Naive thymus-derived CD8-positive, alpha-beta T cell (primary cell): ENCODE measurements at regions of chr19 and their contacts with region 1.

Region 1: DNA sequence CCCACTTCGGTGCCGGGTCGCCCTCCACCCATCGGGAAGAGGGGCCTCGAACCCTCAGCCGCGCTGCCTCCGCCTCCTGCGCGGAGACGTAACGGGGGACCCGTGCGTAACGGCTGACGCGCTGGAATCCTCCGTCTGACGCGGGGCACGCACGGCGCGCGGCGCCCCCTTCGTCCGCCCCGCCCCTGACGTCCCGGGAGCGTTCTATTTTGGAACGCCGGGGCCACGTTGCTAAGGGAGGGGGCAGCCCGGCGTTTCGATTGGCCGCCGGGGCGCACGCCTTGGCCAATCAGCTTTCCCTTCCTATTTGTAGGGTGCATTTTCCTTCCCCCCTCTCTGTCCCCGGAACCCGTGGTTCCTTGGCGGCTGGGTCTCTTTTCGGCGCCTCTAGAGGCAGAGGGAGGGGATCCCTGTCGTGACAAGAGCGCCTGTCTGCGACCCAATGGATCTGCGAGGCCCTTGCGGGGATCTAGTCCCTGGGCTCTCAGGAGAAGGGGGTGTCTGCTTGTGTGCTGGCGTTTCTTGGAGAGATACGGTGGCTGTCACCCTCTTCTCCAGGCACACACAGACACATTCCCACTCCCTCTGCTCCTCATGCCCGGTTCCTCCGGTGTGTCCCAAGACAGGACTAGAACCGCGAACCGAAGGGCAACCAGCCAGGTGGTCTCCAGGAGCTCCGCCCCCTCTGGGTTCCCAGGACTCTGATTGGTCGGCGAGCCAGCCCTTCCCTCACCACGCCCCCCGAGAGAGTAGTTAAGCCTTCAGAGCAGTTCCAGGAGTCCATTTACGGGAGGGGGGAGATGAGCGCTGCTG is 1.5 kb downstream of the FOSB start:
- DNase-seq: peak; percentile 66 to 98 (median 94)
- ATAC-seq: peak; percentile 51 to 63
- H3K4me3 Mint-ChIP-seq: peak overlapping the region; percentile 91 to 98 (median 94)
- H3K27ac Mint-ChIP-seq: peak overlapping the region; percentile 86 to 100 (median 99)
- H3K4me1 Mint-ChIP-seq: peaks cover 25 to 66% (median 41%) of the 10 kb centered on the region in 4 donors
- H3K27me3 Mint-ChIP-seq: peaks cover 7 to 38% (median 16%) of the 10 kb centered on the region in 5 donors

Region 2: GRCh38 chr19:45439569-45440254 is 29.6 kb before region 1 on chr19:
- POLR2A ChIA-PET with region 1: interaction called, 90 read pairs
- DNase-seq: peak; percentile 73 to 97 (median 86)
- ATAC-seq: peak; percentile 59 to 66
- H3K4me3 Mint-ChIP-seq: peak overlapping the region; percentile 58 to 84 (median 76)
- H3K27ac Mint-ChIP-seq: peak overlapping the region in 6 of 10 donors; percentile 81 to 91 (median 89)
- H3K4me1 Mint-ChIP-seq: peaks cover 18 to 40% (median 35%) of the 10 kb centered on the region in 4 donors
- H3K27me3 Mint-ChIP-seq: no peaks in the 10 kb centered on the region

Region 3: DNA sequence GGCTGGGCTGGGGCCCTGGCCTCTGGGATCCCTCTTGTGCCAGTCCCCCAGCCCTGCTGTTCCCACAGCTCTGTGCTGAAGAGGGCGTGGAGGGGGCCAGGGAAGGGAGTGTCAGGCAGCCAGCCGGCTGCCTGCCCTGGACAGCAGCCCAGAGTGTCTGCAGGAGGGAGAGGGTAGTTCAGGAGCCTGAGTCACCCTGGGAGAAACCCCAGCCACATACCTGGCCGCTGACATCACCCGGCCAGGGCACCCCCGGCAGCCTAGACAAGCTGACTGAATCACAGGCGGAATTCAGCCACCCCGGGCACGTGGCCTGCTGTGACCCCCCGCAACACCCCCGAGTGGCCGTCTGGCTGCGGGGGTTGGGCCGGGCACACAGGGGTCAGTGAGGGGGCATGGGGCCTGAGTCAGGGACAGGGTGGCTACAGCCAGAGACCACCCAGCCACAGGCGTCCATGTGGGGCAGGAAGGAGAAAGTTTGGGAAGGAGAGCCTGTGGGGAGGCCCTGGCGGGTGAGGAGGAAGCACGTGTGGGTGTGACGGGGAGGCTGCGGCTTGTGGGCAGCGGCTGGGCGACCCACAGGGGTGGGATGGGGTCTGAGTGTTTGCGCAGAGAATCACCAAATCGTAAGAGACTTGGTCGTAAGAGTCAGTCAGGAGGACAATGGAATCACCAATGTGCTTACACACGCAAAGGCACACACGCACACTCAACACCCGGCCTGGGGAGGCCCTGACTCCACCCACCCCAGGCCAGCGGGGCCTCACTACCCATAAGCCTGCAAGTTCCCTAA is 13.4 kb before region 1 on chr19:
- POLR2A ChIA-PET with region 1: interaction called, 37 read pairs
- DNase-seq: peak; percentile 36 to 75 (median 60)
- ATAC-seq: peak; percentile 46 to 48
- H3K4me3 Mint-ChIP-seq: peak overlapping the region; percentile 31 to 78 (median 60)
- H3K27ac Mint-ChIP-seq: peak overlapping the region in 9 of 10 donors; percentile 66 to 93 (median 88)
- H3K4me1 Mint-ChIP-seq: peaks cover 26 to 47% (median 33%) of the 10 kb centered on the region in 4 donors
- H3K27me3 Mint-ChIP-seq: peaks cover 0 to 10% (median 0%) of the 10 kb centered on the region in 5 donors

Region 4: GRCh38 chr19:45485305-45486077 is 16.2 kb after region 1 on chr19:
- POLR2A ChIA-PET with region 1: interaction called, 11 read pairs
- DNase-seq: peak; percentile 92 to 99 (median 96)
- ATAC-seq: peak; percentile 97 to 99
- H3K4me3 Mint-ChIP-seq: peak overlapping the region; percentile 89 to 97 (median 92)
- H3K27ac Mint-ChIP-seq: peak overlapping the region in 9 of 10 donors; percentile 6 to 92 (median 83)
- H3K4me1 Mint-ChIP-seq: peaks cover 0 to 12% (median 8%) of the 10 kb centered on the region in 4 donors
- H3K27me3 Mint-ChIP-seq: peaks cover 0 to 5% (median 0%) of the 10 kb centered on the region in 5 donors

Region 5: GRCh38 chr19:45528651-45529419 is 59.5 kb after region 1 on chr19:
- POLR2A ChIA-PET with region 1: no interaction called
- DNase-seq: peak in 4 of 10 donors; percentile 24 to 35 (median 32)
- ATAC-seq: peak; percentile 66 to 78
- H3K4me3 Mint-ChIP-seq: peak overlapping the region; percentile 45 to 74 (median 62)
- H3K27ac Mint-ChIP-seq: peak overlapping the region in 5 of 10 donors; percentile 63 to 91 (median 78)
- H3K4me1 Mint-ChIP-seq: peaks cover 8 to 22% (median 17%) of the 10 kb centered on the region in 4 donors
- H3K27me3 Mint-ChIP-seq: peaks cover 0 to 2% (median 0%) of the 10 kb centered on the region in 5 donors

Region 6: DNA sequence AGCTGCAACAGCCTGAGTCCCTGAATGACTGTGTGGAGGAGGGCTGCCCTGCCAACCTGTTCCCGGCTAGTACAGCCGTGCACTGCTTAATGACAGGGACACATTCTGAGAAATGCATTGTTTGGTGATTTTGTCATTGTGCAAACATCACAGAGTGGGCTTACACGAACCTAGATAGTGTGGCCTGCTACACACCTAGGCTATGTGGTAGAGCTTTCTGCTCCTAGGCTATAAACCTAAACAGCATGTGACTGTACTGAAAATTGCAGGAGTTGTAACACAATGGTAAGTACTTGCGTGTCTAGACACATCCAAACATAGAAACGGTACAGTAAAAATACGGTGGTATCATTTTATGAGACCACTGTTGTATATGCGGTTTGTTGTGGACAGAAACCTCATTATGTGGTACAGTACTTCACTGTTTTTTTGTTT is 72.9 kb after region 1 on chr19:
- POLR2A ChIA-PET with region 1: no interaction called
- DNase-seq: no peak
- ATAC-seq: no peak
- H3K4me3 Mint-ChIP-seq: no peak overlapping the region
- H3K27ac Mint-ChIP-seq: no peak overlapping the region
- H3K4me1 Mint-ChIP-seq: peaks cover 0 to 4% (median under 1%) of the 10 kb centered on the region in 4 donors
- H3K27me3 Mint-ChIP-seq: no peaks in the 10 kb centered on the region